Activated naive CD4-positive, alpha-beta T cell treated with anti-CD3 and anti-CD28 coated beads for 36 hours (primary cell): ENCODE measurements at regions of chr10 and their contacts with region 1.

Region 1: GRCh38 chr10:132387764-132388210 is 9.2 kb upstream of the PWWP2B start:
- DNase-seq: peak; percentile 79
- H3K4me3 Mint-ChIP-seq: no peak overlapping the region
- H3K27ac Mint-ChIP-seq: peak overlapping the region; percentile 58
- H3K4me1 Mint-ChIP-seq: peaks cover 2% of the 10 kb centered on the region
- H3K27me3 Mint-ChIP-seq: no peaks in the 10 kb centered on the region

Region 2: DNA sequence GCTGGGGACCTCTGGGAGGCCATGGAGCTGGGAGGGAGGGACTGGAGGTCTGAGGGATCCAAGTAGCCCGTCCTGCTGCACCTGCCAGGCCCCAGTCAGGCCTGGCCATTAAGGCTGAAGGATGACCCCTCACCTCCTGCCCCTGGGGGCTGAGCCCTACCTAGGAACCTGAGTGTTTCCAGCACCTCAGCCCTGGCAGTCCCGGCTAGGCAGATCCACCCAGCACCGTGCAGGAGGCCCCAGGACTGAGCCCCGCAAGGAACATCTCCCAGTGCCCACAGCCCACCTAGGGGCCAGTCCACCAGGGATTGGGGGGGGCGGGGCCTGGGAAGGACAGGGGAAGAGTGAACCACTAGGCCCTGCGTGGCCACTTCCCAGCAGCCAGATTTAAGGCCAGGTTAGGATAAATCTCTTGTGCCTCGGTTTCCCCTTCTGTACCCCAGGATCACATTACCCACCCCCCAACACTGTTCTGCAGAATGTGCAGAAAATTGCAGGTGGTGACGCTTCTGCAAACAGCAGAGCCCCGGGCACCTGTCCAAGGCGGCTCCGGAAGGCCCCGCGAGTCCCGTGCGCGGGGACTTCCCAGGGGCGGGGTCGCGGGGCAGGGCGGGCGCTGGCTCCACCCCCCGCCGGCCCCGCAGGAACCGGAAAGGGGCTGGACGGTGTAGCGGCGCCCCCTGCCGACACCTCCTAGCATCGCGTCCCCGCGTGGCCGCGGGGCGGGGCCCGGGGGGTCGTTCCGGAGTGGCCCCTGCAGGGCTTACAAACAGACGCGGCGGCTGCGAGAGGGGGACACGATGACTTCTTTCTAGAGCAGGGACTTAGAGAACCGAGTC is 65.1 kb after region 1 on chr10:
- CTCF ChIA-PET with region 1: interaction called, 9 read pairs
- intact Hi-C with region 1: loop called (anchors 1 kb)
- DNase-seq: peak; percentile 90
- H3K4me3 Mint-ChIP-seq: peak overlapping the region; percentile 6
- H3K27ac Mint-ChIP-seq: peak overlapping the region; percentile 24
- H3K4me1 Mint-ChIP-seq: peaks cover 19% of the 10 kb centered on the region
- H3K27me3 Mint-ChIP-seq: no peaks in the 10 kb centered on the region

Region 3: DNA sequence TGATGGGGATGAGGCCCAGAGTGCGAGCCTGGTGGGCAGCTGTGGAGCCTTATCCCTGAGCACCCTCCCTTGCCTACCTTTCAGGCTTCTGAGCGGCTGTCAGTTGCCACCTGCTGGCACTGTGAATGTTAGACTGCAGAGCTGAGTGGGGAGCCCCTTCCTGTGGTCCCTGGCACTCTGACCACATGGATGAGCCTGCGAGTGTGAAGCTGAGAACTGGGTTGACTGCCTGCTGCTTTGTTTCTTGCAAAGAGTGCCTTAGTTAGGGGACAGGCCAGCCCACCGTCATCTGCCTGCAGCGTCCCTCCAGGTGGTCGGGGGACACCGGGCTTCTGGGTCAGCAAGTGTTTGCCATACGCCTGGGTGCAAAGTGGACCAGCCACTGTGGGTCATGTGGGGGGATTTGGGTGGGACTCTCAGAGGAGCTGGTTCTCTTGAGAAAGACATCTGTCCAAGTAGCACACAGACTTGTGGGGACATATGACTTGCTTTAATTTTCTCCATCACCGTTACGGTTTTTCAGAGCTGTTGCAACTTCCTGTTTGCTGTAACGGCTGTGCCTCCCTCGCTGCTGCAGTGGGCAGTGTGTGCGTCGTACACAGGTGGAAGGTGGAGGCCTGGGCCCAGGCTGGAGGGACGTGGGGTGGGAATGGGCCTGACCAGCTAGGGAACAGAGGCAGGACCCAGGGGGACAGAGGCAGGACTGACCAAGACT is 163.5 kb after region 1 on chr10:
- CTCF ChIA-PET with region 1: no interaction called
- intact Hi-C with region 1: no loop called
- DNase-seq: peak; percentile 76
- H3K4me3 Mint-ChIP-seq: peak overlapping the region; percentile 72
- H3K27ac Mint-ChIP-seq: peak overlapping the region; percentile 69
- H3K4me1 Mint-ChIP-seq: peaks cover 40% of the 10 kb centered on the region
- H3K27me3 Mint-ChIP-seq: no peaks in the 10 kb centered on the region

Region 4: GRCh38 chr10:132637477-132638129 is 249.8 kb after region 1 on chr10:
- CTCF ChIA-PET with region 1: no interaction called
- intact Hi-C with region 1: loop called (anchors 10 kb)
- DNase-seq: peak; percentile 24
- H3K4me3 Mint-ChIP-seq: no peak overlapping the region
- H3K27ac Mint-ChIP-seq: no peak overlapping the region
- H3K4me1 Mint-ChIP-seq: peaks cover 12% of the 10 kb centered on the region
- H3K27me3 Mint-ChIP-seq: no peaks in the 10 kb centered on the region